CD14-positive monocyte (primary cell): ENCODE measurements at regions of chr15 and their contacts with region 1.

Region 1: DNA sequence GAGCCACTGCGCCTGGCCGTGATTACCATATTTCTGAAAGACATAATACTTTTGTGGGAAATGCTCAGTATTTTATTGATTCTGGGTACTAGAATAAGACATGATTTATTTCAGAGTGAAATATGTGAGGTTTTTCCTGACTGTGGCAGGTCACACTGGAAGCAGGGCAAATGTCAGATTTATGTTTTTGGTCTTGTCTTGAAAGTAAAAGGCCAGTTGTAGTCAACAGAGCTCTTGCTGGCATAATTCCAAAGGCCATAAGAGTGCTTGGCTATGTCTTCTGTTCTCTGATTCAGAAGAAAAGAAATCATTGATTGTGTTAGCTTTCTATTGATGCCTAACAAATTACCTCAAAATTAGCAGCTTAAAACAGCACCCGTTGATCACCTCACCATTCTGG is 176.4 kb downstream of the TJP1 start:
- DNase-seq: no peak
- H3K4me3 ChIP-seq: no peak overlapping the region
- H3K4me3 Mint-ChIP-seq: no peak overlapping the region
- H3K27ac ChIP-seq: no peak overlapping the region
- H3K27ac Mint-ChIP-seq: no peak overlapping the region
- H3K4me1 ChIP-seq: no peaks in the 10 kb centered on the region
- H3K4me1 Mint-ChIP-seq: no peaks in the 10 kb centered on the region
- H3K27me3 ChIP-seq: no peaks in the 10 kb centered on the region
- H3K27me3 Mint-ChIP-seq: peaks cover 0 to 7% (median 0%) of the 10 kb centered on the region in 3 donors
- CTCF ChIP-seq: no peak

Region 2: GRCh38 chr15:29322415-29322814 is 323.4 kb before region 1 on chr15:
- intact Hi-C with region 1: no loop called
- DNase-seq: no peak
- H3K4me3 ChIP-seq: no peak overlapping the region
- H3K4me3 Mint-ChIP-seq: no peak overlapping the region
- H3K27ac ChIP-seq: no peak overlapping the region
- H3K27ac Mint-ChIP-seq: no peak overlapping the region
- H3K4me1 ChIP-seq: no peaks in the 10 kb centered on the region
- H3K4me1 Mint-ChIP-seq: no peaks in the 10 kb centered on the region
- H3K27me3 ChIP-seq: no peaks in the 10 kb centered on the region
- H3K27me3 Mint-ChIP-seq: peaks cover 0 to 2% (median 1%) of the 10 kb centered on the region in 3 donors
- CTCF ChIP-seq: no peak

Region 3: GRCh38 chr15:29589406-29589805 is 56.4 kb before region 1 on chr15:
- intact Hi-C with region 1: loop called in 1 of 2 experiments (anchors 10 kb)
- DNase-seq: no peak
- H3K4me3 ChIP-seq: no peak overlapping the region
- H3K4me3 Mint-ChIP-seq: no peak overlapping the region
- H3K27ac ChIP-seq: no peak overlapping the region
- H3K27ac Mint-ChIP-seq: peak overlapping the region in 1 of 7 donors; percentile 28
- H3K4me1 ChIP-seq: no peaks in the 10 kb centered on the region
- H3K4me1 Mint-ChIP-seq: no peaks in the 10 kb centered on the region
- H3K27me3 ChIP-seq: no peaks in the 10 kb centered on the region
- H3K27me3 Mint-ChIP-seq: peaks cover 0 to 11% (median 3%) of the 10 kb centered on the region in 3 donors
- CTCF ChIP-seq: no peak

Region 4: DNA sequence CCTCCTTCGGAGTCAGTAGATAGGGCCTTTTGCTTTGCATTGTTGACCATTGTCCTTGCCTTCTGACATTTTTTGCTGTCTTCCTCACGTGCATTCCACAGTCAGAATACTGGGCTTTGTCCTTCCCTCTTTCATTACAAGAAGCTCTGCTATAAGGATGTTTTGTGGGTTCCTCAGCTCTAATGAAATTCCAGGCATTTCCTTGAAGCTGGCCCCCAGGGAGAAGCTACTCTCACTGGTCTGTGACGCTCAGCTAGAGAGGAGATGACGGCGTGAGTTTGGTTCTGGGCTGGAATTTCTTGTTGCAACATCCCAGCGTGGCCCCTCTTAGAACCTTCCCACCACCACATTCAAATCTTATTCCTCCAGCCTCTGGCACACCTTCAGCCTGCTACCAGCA is 33.7 kb before region 1 on chr15:
- intact Hi-C with region 1: no loop called
- DNase-seq: no peak
- H3K4me3 ChIP-seq: no peak overlapping the region
- H3K4me3 Mint-ChIP-seq: no peak overlapping the region
- H3K27ac ChIP-seq: no peak overlapping the region
- H3K27ac Mint-ChIP-seq: no peak overlapping the region
- H3K4me1 ChIP-seq: no peaks in the 10 kb centered on the region
- H3K4me1 Mint-ChIP-seq: no peaks in the 10 kb centered on the region
- H3K27me3 ChIP-seq: no peaks in the 10 kb centered on the region
- H3K27me3 Mint-ChIP-seq: peaks cover 1 to 2% (median 1%) of the 10 kb centered on the region in 3 donors
- CTCF ChIP-seq: no peak

Region 5: DNA sequence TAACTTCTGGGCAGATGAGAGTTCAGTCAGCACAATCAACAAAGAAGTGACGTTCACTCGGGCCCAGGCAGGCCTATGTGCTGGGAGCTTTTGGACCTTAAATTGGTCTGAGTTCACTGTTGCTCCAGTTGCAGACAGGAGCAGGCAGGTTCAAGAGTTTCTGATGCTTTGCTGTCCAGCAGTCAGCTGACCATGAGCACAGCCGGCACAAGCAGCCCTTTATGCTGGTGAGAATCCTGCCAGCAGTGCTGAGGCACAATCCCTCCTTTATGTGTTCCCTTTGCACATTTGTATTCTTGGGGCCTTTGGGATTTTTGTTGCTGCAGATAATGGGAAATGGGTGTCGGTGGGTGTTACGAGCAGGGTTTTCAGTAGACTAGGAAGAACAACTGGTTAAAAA is 355.8 kb after region 1 on chr15:
- intact Hi-C with region 1: no loop called
- DNase-seq: no peak
- H3K4me3 ChIP-seq: no peak overlapping the region
- H3K4me3 Mint-ChIP-seq: no peak overlapping the region
- H3K27ac ChIP-seq: no peak overlapping the region
- H3K27ac Mint-ChIP-seq: no peak overlapping the region
- H3K4me1 ChIP-seq: no peaks in the 10 kb centered on the region
- H3K4me1 Mint-ChIP-seq: no peaks in the 10 kb centered on the region
- H3K27me3 ChIP-seq: no peaks in the 10 kb centered on the region
- H3K27me3 Mint-ChIP-seq: peaks cover 1 to 5% (median 3%) of the 10 kb centered on the region in 3 donors
- CTCF ChIP-seq: no peak